Naive thymus-derived CD4-positive, alpha-beta T cell (primary cell): ENCODE measurements at regions of chr19 and their contacts with region 1.

Region 1: GRCh38 chr19:39341719-39342604 is at the start of gene SAMD4B:
- DNase-seq: peak; percentile 97 to 100 (median 99)
- ATAC-seq: peak; percentile 93
- H3K4me3 ChIP-seq: peak within 1 kb of the TSS; percentile 95
- H3K4me3 Mint-ChIP-seq: peak within 1 kb of the TSS; percentile 90 to 100 (median 97)
- H3K27ac ChIP-seq: peak within 1 kb of the TSS; percentile 84
- H3K27ac Mint-ChIP-seq: peak within 1 kb of the TSS; percentile 90 to 97 (median 96)
- H3K4me1 ChIP-seq: peaks cover 23 to 42% of the 10 kb centered on the region in 2 donors
- H3K4me1 Mint-ChIP-seq: peaks cover 64 to 77% (median 73%) of the 10 kb centered on the region in 7 donors
- H3K27me3 ChIP-seq: no peaks in the 10 kb centered on the region
- H3K27me3 Mint-ChIP-seq: no peaks in the 10 kb centered on the region
- total RNA-seq, gene SAMD4B: 52.0 to 84.6 (median 65.6) TPM

Region 2: GRCh38 chr19:38849860-38850435 is 492.0 kb before region 1 on chr19 and contains the start of gene HNRNPL:
- CTCF ChIA-PET with region 1: no interaction called
- POLR2A ChIA-PET with region 1: no interaction called
- intact Hi-C with region 1: loop called (anchors 1 to 5 kb)
- DNase-seq: peak; percentile 99 to 100 (median 100)
- ATAC-seq: peak; percentile 78
- H3K4me3 ChIP-seq: peak within 1 kb of the TSS; percentile 81
- H3K4me3 Mint-ChIP-seq: peak within 1 kb of the TSS; percentile 88 to 99 (median 96)
- H3K27ac ChIP-seq: peak within 1 kb of the TSS; percentile 96
- H3K27ac Mint-ChIP-seq: peak within 1 kb of the TSS; percentile 94 to 100 (median 99)
- H3K4me1 ChIP-seq: peaks cover 24 to 41% of the 10 kb centered on the region in 2 donors
- H3K4me1 Mint-ChIP-seq: peaks cover 30 to 67% (median 50%) of the 10 kb centered on the region in 7 donors
- H3K27me3 ChIP-seq: no peaks in the 10 kb centered on the region
- H3K27me3 Mint-ChIP-seq: peaks cover 0 to 5% (median 0%) of the 10 kb centered on the region in 5 donors
- total RNA-seq, gene HNRNPL: 339 to 539 (median 505) TPM

Region 3: GRCh38 chr19:39125554-39126311 is 216.2 kb before region 1 on chr19 and contains the start of gene PAK4:
- CTCF ChIA-PET with region 1: no interaction called
- POLR2A ChIA-PET with region 1: interaction called, 3 read pairs
- intact Hi-C with region 1: loop called in 1 of 2 experiments (anchors 1 kb)
- DNase-seq: peak; percentile 89 to 99 (median 92)
- ATAC-seq: peak; percentile 99
- H3K4me3 ChIP-seq: peak within 1 kb of the TSS; percentile 61
- H3K4me3 Mint-ChIP-seq: peak within 1 kb of the TSS; percentile 90 to 98 (median 94)
- H3K27ac ChIP-seq: peak within 1 kb of the TSS; percentile 90
- H3K27ac Mint-ChIP-seq: peak within 1 kb of the TSS; percentile 92 to 99 (median 97)
- H3K4me1 ChIP-seq: peaks cover 0 to 10% of the 10 kb centered on the region in 2 donors
- H3K4me1 Mint-ChIP-seq: peaks cover 26 to 50% (median 37%) of the 10 kb centered on the region in 7 donors
- H3K27me3 ChIP-seq: no peaks in the 10 kb centered on the region
- H3K27me3 Mint-ChIP-seq: peaks cover 0 to 7% (median 0%) of the 10 kb centered on the region in 5 donors
- total RNA-seq, gene PAK4: 9.3 to 17.5 (median 12.7) TPM

Region 4: DNA sequence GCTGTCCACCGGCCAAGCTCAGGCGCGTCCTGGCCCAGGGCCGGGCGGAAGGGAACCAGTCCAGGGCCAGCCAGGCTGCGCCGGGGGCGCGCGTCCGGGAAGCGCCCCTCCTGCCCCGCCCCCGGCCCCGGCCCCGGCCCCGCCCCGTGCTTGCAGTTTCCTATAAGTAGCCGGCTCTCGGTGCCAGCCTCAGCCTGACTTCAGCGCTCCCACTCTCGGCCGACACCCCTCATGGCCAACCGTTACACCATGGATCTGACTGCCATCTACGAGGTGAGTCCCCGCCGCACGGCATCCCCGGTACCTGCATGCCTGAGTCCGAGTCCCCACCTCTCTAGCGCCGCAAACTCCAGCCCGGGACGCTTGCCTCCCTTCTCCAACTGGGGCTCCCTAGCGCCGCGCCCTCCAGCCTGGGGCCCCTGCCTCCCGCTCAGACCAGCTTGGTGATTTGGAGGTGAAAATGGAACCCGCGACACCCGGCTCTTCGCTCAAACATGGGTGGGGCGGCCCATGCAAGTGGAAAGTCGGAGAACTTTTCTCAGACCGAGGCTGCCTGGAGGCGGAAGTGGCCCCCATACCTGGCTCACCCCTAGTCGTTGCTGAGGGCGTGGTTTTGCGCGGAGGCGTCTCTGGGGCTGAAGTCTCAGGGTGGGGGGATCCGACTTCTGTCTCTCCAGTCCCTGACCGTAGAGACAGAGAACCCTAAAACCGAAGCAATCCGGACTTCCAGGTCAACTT is 64.9 kb after region 1 on chr19 and contains the start of gene ZFP36:
- CTCF ChIA-PET with region 1: interaction called, 3 read pairs
- POLR2A ChIA-PET with region 1: interaction called, 14 read pairs
- intact Hi-C with region 1: loop called (anchors 1 kb)
- DNase-seq: peak; percentile 82 to 91 (median 86)
- ATAC-seq: peak; percentile 51
- H3K4me3 ChIP-seq: peak within 1 kb of the TSS; percentile 100
- H3K4me3 Mint-ChIP-seq: peak within 1 kb of the TSS; percentile 89 to 99 (median 94)
- H3K27ac ChIP-seq: peak within 1 kb of the TSS; percentile 100
- H3K27ac Mint-ChIP-seq: peak within 1 kb of the TSS; percentile 96 to 99 (median 99)
- H3K4me1 ChIP-seq: peaks cover 41 to 52% of the 10 kb centered on the region in 2 donors
- H3K4me1 Mint-ChIP-seq: peaks cover 28 to 67% (median 48%) of the 10 kb centered on the region in 7 donors
- H3K27me3 ChIP-seq: no peaks in the 10 kb centered on the region
- H3K27me3 Mint-ChIP-seq: peaks cover 0 to 3% (median 0%) of the 10 kb centered on the region in 5 donors
- total RNA-seq, gene ZFP36: 72.1 to 1,250 (median 187) TPM

Region 5: GRCh38 chr19:39445265-39446111 is 103.5 kb after region 1 on chr19 and contains the start of gene SUPT5H:
- CTCF ChIA-PET with region 1: no interaction called
- POLR2A ChIA-PET with region 1: interaction called, 5 read pairs
- intact Hi-C with region 1: loop called in 1 of 2 experiments (anchors 1 kb)
- DNase-seq: peak; percentile 84 to 99 (median 97)
- ATAC-seq: peak; percentile 96
- H3K4me3 ChIP-seq: peak within 1 kb of the TSS; percentile 77
- H3K4me3 Mint-ChIP-seq: peak within 1 kb of the TSS; percentile 91 to 100 (median 97)
- H3K27ac ChIP-seq: peak within 1 kb of the TSS; percentile 98
- H3K27ac Mint-ChIP-seq: peak within 1 kb of the TSS; percentile 95 to 100 (median 99)
- H3K4me1 ChIP-seq: peaks cover 35 to 47% of the 10 kb centered on the region in 2 donors
- H3K4me1 Mint-ChIP-seq: peaks cover 38 to 61% (median 48%) of the 10 kb centered on the region in 7 donors
- H3K27me3 ChIP-seq: no peaks in the 10 kb centered on the region
- H3K27me3 Mint-ChIP-seq: no peaks in the 10 kb centered on the region
- total RNA-seq, gene SUPT5H: 180 to 247 (median 203) TPM

Region 6: DNA sequence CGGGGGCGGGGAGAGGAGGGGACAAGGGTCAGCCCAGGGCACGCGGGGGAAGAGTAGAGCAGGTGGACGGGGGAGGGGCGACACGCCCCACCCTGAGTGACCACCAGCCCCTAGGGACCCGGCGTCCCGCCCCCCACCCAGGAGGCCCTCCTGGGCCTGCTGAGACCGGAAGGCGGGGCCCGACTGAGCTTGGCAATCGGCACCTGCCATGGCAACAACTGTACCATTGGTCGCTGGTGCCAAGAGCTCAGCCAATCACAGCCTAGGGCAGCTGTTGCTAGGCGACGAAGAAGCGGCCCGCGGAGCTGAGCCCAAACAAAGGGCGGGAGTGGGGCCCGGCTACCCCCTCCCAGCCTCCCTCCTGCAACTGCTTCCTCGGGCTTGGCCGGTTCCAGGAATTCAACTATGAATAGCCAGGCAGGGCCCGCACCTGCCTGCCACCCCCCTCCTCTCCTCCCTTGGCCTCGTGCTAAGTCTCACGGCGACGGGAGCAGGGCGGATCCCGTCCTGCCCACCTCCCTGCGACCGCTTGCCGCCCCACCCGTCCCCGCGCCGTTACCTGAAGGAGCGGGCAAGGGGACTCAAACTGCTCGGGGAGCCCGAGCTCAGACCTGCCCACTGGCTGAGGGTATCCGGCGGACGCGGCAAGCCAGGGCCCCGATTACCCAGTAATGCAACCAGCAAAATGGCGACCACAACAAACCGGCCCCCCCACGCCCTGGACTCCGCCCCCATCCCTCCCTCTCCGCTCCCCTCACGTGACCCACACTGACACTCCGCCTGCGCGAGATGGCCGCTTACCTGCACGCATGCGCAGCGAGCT is 491.7 kb after region 1 on chr19 and contains the start of gene DYRK1B:
- CTCF ChIA-PET with region 1: no interaction called
- POLR2A ChIA-PET with region 1: no interaction called
- intact Hi-C with region 1: loop called (anchors 2 to 5 kb)
- DNase-seq: peak; percentile 90 to 99 (median 98)
- ATAC-seq: peak; percentile 92
- H3K4me3 ChIP-seq: peak within 1 kb of the TSS; percentile 100
- H3K4me3 Mint-ChIP-seq: peak within 1 kb of the TSS; percentile 60 to 88 (median 81)
- H3K27ac ChIP-seq: peak within 1 kb of the TSS; percentile 96
- H3K27ac Mint-ChIP-seq: peak within 1 kb of the TSS; percentile 85 to 96 (median 92)
- H3K4me1 ChIP-seq: peaks cover 17 to 23% of the 10 kb centered on the region in 2 donors
- H3K4me1 Mint-ChIP-seq: peaks cover 19 to 37% (median 27%) of the 10 kb centered on the region in 7 donors
- H3K27me3 ChIP-seq: no peaks in the 10 kb centered on the region
- H3K27me3 Mint-ChIP-seq: no peaks in the 10 kb centered on the region
- total RNA-seq, gene DYRK1B: 12.3 to 38.9 (median 23.5) TPM

Region 7: DNA sequence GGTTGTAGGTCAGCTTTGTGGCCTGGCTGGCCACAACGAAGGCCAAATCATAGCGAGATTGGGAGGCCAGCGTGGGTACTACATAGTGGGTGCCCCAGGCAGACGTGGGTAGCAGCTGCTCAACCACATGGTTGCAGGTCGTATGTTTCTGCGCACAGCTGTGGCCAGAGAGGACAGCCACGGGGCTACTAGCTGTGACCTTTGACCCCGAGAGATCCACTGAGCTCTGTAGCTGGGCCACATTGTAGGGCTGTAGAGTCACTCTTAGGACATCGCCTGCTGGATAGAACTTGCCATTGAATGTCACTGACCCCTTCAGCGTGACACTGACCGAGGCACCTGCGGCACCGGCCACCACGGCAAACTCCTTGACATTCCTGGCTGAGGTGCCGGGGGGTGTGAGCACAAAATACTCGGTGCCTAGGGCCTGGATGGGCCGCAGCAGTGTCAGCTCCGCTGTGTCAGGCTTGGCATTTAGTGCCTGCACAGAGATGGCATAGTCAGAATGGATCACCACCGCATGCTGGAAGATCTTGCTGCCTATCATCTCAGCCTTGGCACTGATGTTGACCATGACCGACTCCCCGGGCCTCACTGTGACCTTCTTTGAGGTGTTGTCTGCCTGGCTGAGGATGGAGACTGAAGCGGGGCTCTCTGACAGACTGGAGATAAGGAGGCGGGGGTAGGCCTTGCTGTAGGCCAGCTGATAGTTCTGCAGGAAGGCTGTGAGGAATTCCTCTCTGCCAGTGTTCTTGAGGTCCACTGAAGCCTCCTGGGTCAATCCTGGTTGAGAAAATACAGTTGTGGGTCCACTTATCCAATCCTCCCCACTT is 585.8 kb after region 1 on chr19:
- CTCF ChIA-PET with region 1: no interaction called
- POLR2A ChIA-PET with region 1: no interaction called
- intact Hi-C with region 1: no loop called
- DNase-seq: no peak
- ATAC-seq: no peak
- H3K4me3 ChIP-seq: no peak overlapping the region
- H3K4me3 Mint-ChIP-seq: peak overlapping the region in 4 of 10 donors; percentile 5 to 39 (median 16)
- H3K27ac ChIP-seq: no peak overlapping the region
- H3K27ac Mint-ChIP-seq: peak overlapping the region in 5 of 9 donors; percentile 2 to 63 (median 39)
- H3K4me1 ChIP-seq: peaks cover 0 to 8% of the 10 kb centered on the region in 2 donors
- H3K4me1 Mint-ChIP-seq: peaks cover 6 to 47% (median 36%) of the 10 kb centered on the region in 7 donors
- H3K27me3 ChIP-seq: no peaks in the 10 kb centered on the region
- H3K27me3 Mint-ChIP-seq: peaks cover 0 to 3% (median 0%) of the 10 kb centered on the region in 5 donors